PC-9 (cell line): ENCODE measurements at regions of chr15 and their contacts with region 1.

Region 1: DNA sequence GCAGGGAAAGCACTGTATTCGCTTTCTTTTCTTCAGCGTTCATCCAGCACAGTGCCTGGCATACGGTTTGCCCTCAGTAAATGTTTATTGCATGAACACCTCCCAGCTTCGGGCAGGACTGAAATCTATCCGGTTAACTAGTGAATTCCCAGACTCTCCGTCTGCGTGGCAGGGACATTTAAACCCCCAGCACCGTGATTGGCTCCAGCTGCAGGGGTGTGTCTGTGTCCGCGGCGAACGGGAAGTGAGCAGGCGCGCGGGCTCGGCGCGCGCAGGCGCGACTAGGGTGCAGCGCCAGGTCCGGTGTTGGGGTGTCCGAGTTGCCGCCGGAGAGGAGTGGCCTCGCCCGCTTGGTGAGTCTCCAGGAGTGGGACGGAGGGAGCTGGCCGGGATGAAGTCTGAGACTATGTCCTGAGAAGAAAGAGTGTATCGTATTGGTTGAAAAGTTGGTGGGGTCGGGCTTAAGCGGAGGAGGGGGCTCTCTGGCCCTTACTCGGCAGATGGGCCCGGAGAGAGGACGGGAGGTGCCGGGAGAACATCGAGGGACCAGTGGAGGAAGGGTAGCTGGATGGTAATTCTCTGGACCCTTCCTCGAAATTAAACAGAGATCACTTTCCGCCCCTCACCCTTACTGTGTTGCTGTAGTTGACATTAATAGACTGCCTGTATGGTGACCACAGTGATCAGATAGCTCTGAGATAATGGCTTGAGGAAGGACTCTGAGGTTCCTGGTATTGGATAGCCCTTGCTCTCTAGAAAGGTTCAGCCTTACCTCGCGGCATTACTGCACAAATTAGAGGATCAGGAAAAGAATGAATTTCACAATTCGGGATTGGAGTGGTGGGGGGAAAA is at the start of gene SNAP23:
- DNase-seq: peak; percentile 83 to 94
- H3K4me3 ChIP-seq: peak within 1 kb of the TSS; percentile 77
- H3K27ac ChIP-seq: peak within 1 kb of the TSS; percentile 67
- H3K4me1 ChIP-seq: peaks cover 35% of the 10 kb centered on the region
- H3K27me3 ChIP-seq: no peaks in the 10 kb centered on the region
- CTCF ChIP-seq: no peak
- total RNA-seq, gene SNAP23: 47.1 and 65.8 TPM in 2 replicates

Region 2: DNA sequence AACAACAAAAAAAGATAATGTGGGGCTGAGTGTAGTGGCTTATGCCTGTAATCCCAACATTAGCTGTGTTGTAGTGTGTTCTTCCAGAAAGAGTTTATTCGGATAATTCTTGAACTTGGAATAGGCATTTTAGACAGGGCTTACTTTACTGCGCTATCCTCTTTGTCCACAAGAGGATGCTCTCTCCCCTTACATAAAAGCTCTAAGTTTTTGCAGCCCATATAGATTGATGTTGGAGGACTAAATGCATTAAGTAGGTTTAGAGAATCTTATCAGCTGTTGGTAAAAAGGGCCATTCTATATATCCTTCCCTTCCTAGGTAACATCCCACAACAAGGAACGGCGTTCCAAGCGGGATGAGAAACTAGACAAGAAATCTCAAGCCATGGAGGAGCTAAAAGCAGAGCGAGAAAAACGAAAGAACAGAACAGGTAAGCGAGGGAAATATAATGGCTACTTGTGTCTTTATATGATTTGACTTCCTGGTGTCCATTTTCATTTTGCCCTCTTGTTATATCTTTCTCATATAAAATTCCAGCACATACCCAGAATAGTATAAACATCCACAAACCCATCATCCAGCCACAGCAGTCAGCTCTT is 1029.7 kb before region 1 on chr15:
- CTCF ChIA-PET with region 1: no interaction called
- POLR2A ChIA-PET with region 1: interaction called, 12 read pairs
- intact Hi-C with region 1: no loop called
- DNase-seq: no peak
- H3K4me3 ChIP-seq: no peak overlapping the region
- H3K27ac ChIP-seq: no peak overlapping the region
- H3K4me1 ChIP-seq: no peaks in the 10 kb centered on the region
- H3K27me3 ChIP-seq: no peaks in the 10 kb centered on the region
- CTCF ChIP-seq: peak; percentile 82

Region 3: GRCh38 chr15:42511010-42511396 is 15.4 kb after region 1 on chr15:
- CTCF ChIA-PET with region 1: no interaction called
- POLR2A ChIA-PET with region 1: interaction called, 6 read pairs
- intact Hi-C with region 1: loop called (anchors 2 kb)
- DNase-seq: peak in 1 of 2 experiments; percentile 66
- H3K4me3 ChIP-seq: no peak overlapping the region
- H3K27ac ChIP-seq: no peak overlapping the region
- H3K4me1 ChIP-seq: no peaks in the 10 kb centered on the region
- H3K27me3 ChIP-seq: no peaks in the 10 kb centered on the region
- CTCF ChIP-seq: no peak

Region 4: GRCh38 chr15:42523331-42523730 is 27.7 kb after region 1 on chr15:
- CTCF ChIA-PET with region 1: interaction called, 13 read pairs
- POLR2A ChIA-PET with region 1: no interaction called
- intact Hi-C with region 1: no loop called
- DNase-seq: no peak
- H3K4me3 ChIP-seq: no peak overlapping the region
- H3K27ac ChIP-seq: no peak overlapping the region
- H3K4me1 ChIP-seq: no peaks in the 10 kb centered on the region
- H3K27me3 ChIP-seq: no peaks in the 10 kb centered on the region
- CTCF ChIP-seq: no peak

Region 5: GRCh38 chr15:42548253-42549031 is 52.9 kb after region 1 on chr15 and contains the starts of genes HAUS2 and LRRC57:
- CTCF ChIA-PET with region 1: no interaction called
- POLR2A ChIA-PET with region 1: no interaction called
- intact Hi-C with region 1: loop called (anchors 2 kb)
- DNase-seq: peak; percentile 65 to 86
- H3K4me3 ChIP-seq: peak within 1 kb of the TSS; percentile 87
- H3K27ac ChIP-seq: peak within 1 kb of the TSS; percentile 40
- H3K4me1 ChIP-seq: peaks cover 15% of the 10 kb centered on the region
- H3K27me3 ChIP-seq: no peaks in the 10 kb centered on the region
- CTCF ChIP-seq: no peak
- total RNA-seq, gene HAUS2: 17.7 and 23.7 TPM in 2 replicates
- total RNA-seq, gene LRRC57: 22.7 and 23.0 TPM in 2 replicates